Activated B cell treated with CpG ODN at 0.5 μM for 24 hours (primary cell): ENCODE measurements at regions of chr3 and their contacts with region 1.

Region 1: GRCh38 chr3:24185738-24186384 is 240.8 kb downstream of the NR1D2 start:
- DNase-seq: no peak
- ATAC-seq: peak; percentile 62
- H3K4me3 Mint-ChIP-seq: no peak overlapping the region
- H3K27ac Mint-ChIP-seq: no peak overlapping the region
- H3K4me1 Mint-ChIP-seq: no peaks in the 10 kb centered on the region
- H3K27me3 Mint-ChIP-seq: no peaks in the 10 kb centered on the region
- CTCF ChIP-seq: no peak

Region 2: DNA sequence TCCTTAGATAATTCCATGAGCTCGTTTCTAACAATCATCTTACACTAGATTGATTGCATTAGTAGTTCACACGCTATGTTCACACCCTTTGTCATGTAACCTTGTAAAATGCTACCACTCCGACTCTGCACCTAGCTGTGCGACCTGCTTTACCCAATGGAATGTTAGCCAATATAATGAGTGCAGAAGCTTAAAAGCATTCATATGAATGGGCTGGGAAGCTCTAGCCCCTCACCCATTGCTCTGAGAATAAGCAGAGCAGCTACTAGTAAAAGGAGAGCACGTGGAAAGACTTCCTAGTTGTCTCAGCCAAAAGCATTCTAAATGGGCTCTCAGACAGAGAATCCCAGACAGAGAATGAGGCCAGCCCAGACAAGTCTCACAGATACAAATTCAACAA is 1393.3 kb before region 1 on chr3:
- CTCF ChIA-PET with region 1: no interaction called
- POLR2A ChIA-PET with region 1: no interaction called
- intact Hi-C with region 1: no loop called
- DNase-seq: no peak
- ATAC-seq: no peak
- H3K4me3 Mint-ChIP-seq: no peak overlapping the region
- H3K27ac Mint-ChIP-seq: no peak overlapping the region
- H3K4me1 Mint-ChIP-seq: no peaks in the 10 kb centered on the region
- H3K27me3 Mint-ChIP-seq: no peaks in the 10 kb centered on the region
- CTCF ChIP-seq: no peak

Region 3: GRCh38 chr3:24237971-24238767 is 52.3 kb after region 1 on chr3:
- CTCF ChIA-PET with region 1: interaction called, 6 read pairs
- POLR2A ChIA-PET with region 1: no interaction called
- intact Hi-C with region 1: loop called (anchors 2 kb)
- DNase-seq: no peak
- ATAC-seq: peak; percentile 75
- H3K4me3 Mint-ChIP-seq: no peak overlapping the region
- H3K27ac Mint-ChIP-seq: no peak overlapping the region
- H3K4me1 Mint-ChIP-seq: no peaks in the 10 kb centered on the region
- H3K27me3 Mint-ChIP-seq: no peaks in the 10 kb centered on the region
- CTCF ChIP-seq: no peak

Region 4: DNA sequence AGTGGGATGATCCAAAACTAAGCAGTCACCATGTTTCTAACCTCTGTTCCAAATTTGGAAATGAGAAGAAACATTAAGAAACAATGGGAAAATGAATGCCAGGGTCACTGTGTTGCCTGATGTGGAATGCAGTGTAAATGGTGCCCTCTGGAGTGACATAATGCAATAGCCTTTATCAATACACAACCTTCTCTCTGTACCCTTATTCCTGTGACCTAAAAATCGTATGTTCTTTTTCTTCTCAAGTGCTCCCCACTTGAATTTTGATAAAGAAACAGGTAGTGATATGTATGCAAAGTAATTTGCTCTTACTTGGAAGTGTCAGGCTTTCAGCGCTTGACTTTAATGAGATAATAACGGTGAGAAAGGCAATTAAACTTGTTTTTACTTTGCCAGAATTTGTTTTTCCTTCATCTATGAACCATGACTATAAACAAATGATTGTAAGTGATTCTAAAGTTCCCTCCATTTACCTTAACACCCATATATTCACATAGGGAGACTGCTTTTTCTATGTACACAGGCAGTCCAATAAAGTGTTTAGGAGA is 454.5 kb after region 1 on chr3:
- CTCF ChIA-PET with region 1: interaction called, 4 read pairs
- POLR2A ChIA-PET with region 1: no interaction called
- intact Hi-C with region 1: loop called (anchors 1 kb)
- DNase-seq: no peak
- ATAC-seq: no peak
- H3K4me3 Mint-ChIP-seq: no peak overlapping the region
- H3K27ac Mint-ChIP-seq: no peak overlapping the region
- H3K4me1 Mint-ChIP-seq: no peaks in the 10 kb centered on the region
- H3K27me3 Mint-ChIP-seq: peaks cover 9% of the 10 kb centered on the region
- CTCF ChIP-seq: no peak